ENCODE measurements at regions of chr16 and their contacts with region 1.

Region 1: GRCh38 chr16:22077700-22078313 is 14.5 kb upstream of the VWA3A start:
- DNase-seq: peak; percentile 60
- ATAC-seq: peak; percentile 51

Region 2: DNA sequence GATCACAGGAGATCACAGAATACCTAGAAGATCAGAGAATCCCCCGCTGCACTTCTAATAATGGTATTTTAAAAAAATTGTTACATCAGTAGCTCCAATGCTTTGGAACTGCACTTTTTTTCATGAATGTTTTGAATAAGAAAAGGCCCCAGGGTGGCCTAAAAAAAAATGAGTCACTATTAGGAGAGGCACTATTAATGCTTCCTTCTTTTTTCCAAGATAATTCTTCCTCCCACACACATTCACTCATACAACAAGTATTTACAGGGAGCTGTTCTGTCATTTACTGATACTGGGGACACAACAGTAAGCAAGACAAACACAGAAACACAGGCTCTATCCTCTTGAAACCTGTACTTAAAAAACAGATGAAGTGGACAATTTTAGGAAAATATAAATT is 76.2 kb before region 1 on chr16:
- intact Hi-C with region 1: loop called (anchors 2 kb)
- DNase-seq: no peak
- ATAC-seq: no peak

Region 3: GRCh38 chr16:22007509-22008214 is 70.1 kb before region 1 on chr16 and contains the start of gene MOSMO:
- intact Hi-C with region 1: loop called (anchors 2 kb)
- DNase-seq: peak; percentile 86
- ATAC-seq: peak; percentile 98
- total RNA-seq, gene MOSMO: 12.0 TPM

Region 4: GRCh38 chr16:22188595-22189442 is 111.0 kb after region 1 on chr16:
- intact Hi-C with region 1: loop called (anchors 10 kb)
- DNase-seq: peak; percentile 65
- ATAC-seq: no peak

Measured in Right ventricle myocardium superior (tissue), 1 donor.